CD8-positive, alpha-beta T cell (primary cell): ENCODE measurements at regions of chr17 and their contacts with region 1.

Region 1: GRCh38 chr17:59311130-59311920 is 20.1 kb upstream of the YPEL2 start:
- DNase-seq: peak in 6 of 9 experiments; percentile 16 to 77 (median 42)
- ATAC-seq: peak; percentile 99
- H3K4me3 ChIP-seq: no peak overlapping the region
- H3K4me3 Mint-ChIP-seq: no peak overlapping the region
- H3K27ac ChIP-seq: no peak overlapping the region
- H3K27ac Mint-ChIP-seq: no peak overlapping the region
- H3K4me1 ChIP-seq: no peaks in the 10 kb centered on the region
- H3K4me1 Mint-ChIP-seq: no peaks in the 10 kb centered on the region
- H3K27me3 ChIP-seq: no peaks in the 10 kb centered on the region
- H3K27me3 Mint-ChIP-seq: no peaks in the 10 kb centered on the region
- CTCF ChIP-seq: peak; percentile 76

Region 2: DNA sequence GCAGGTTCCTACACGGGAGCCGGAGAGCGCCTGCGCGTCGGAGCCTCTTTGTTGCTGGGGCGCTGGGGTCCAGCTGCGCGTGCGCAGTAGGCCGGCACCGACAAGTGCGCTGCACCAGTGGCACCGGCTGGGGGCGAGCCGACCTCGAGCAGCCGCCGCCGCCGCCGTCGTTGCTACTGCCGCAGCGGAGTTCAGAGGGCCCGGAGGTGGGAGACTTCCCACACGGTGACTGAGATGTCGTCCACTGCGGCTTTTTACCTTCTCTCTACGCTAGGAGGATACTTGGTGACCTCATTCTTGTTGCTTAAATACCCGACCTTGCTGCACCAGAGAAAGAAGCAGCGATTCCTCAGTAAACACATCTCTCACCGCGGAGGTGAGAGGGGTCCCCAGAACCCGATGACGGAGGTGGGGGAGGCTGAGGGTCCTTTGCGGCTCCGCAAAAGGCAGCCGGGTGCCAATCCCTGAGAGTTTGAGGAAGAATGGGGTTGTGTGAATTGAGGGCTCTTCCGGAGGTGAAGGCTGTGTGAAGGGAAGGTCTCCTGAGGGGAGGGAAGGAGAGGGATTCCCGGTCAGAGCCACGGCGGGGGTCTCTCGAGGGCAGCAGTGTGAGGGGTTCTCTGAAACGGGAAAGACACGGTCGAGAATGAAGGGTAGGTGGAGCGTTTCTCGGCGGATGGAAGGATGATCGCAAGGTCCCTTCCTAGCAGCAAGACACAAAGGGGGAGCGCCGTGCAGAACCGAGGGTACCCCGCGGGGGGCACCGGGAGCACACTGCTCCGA is 90.8 kb before region 1 on chr17 and contains the start of gene GDPD1:
- CTCF ChIA-PET with region 1: no interaction called
- POLR2A ChIA-PET with region 1: no interaction called
- intact Hi-C with region 1: loop called in 1 of 2 experiments (anchors 1 kb)
- DNase-seq: peak; percentile 94 to 99 (median 97)
- ATAC-seq: peak; percentile 96
- H3K4me3 ChIP-seq: peak within 1 kb of the TSS; percentile 97 to 100
- H3K4me3 Mint-ChIP-seq: peak within 1 kb of the TSS; percentile 98
- H3K27ac ChIP-seq: peak within 1 kb of the TSS; percentile 91 to 92
- H3K27ac Mint-ChIP-seq: peak within 1 kb of the TSS; percentile 99
- H3K4me1 ChIP-seq: peaks cover 4% of the 10 kb centered on the region
- H3K4me1 Mint-ChIP-seq: peaks cover 13% of the 10 kb centered on the region
- H3K27me3 ChIP-seq: no peaks in the 10 kb centered on the region
- H3K27me3 Mint-ChIP-seq: no peaks in the 10 kb centered on the region
- CTCF ChIP-seq: peak; percentile 71
- total RNA-seq, gene GDPD1: 1.1 to 1.8 TPM

Region 3: DNA sequence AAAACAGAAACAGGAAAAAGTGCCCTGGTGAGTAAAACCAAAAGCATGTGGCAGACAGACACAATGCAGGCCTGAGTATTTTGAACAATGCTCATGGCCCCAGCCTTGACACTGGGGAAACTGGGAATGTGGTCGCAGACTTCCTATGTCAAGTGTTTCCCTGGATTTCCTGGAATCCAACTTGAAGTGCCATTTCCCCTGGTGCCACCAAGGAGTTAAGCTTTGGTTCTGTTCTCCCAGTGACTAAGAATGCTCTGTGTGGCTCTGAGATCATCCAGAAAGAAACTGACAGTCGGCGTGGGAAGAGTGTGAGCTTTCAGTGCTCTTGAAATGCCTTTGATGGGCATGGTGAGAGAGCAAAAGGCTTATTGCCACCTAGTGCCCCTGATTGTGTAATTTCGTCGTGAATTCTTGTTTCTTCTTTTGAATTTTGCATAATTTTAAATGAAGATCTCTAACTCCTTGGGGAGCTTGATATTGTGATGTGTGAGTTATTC is 116.1 kb after region 1 on chr17:
- CTCF ChIA-PET with region 1: interaction called, 40 read pairs
- POLR2A ChIA-PET with region 1: no interaction called
- intact Hi-C with region 1: no loop called
- DNase-seq: peak in 4 of 9 experiments; percentile 6 to 40 (median 22)
- ATAC-seq: no peak
- H3K4me3 ChIP-seq: no peak overlapping the region
- H3K4me3 Mint-ChIP-seq: no peak overlapping the region
- H3K27ac ChIP-seq: no peak overlapping the region
- H3K27ac Mint-ChIP-seq: no peak overlapping the region
- H3K4me1 ChIP-seq: peaks cover 6% of the 10 kb centered on the region
- H3K4me1 Mint-ChIP-seq: peaks cover 9% of the 10 kb centered on the region
- H3K27me3 ChIP-seq: no peaks in the 10 kb centered on the region
- H3K27me3 Mint-ChIP-seq: no peaks in the 10 kb centered on the region
- CTCF ChIP-seq: no peak

Region 4: DNA sequence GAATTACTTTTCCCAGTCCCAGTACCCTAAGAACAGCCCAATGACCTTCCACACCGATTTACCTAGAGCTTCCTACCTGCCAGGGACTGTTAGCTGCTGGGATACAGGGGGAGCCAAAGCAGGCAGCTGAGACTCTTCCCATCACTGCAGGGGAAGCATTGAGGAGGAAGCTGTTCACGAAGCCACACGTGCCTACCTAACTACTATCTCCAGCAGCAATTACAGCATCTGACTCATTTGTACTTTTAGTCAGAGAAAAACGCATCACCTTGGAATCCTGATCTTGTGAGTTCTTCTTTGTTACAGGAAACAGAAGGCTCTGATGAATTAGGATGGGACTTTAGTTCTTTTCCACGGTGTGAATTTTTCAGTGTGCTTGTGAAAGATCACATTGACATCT is 140.4 kb after region 1 on chr17:
- CTCF ChIA-PET with region 1: interaction called, 12 read pairs
- POLR2A ChIA-PET with region 1: no interaction called
- intact Hi-C with region 1: no loop called
- DNase-seq: no peak
- ATAC-seq: no peak
- H3K4me3 ChIP-seq: no peak overlapping the region
- H3K4me3 Mint-ChIP-seq: no peak overlapping the region
- H3K27ac ChIP-seq: no peak overlapping the region
- H3K27ac Mint-ChIP-seq: no peak overlapping the region
- H3K4me1 ChIP-seq: no peaks in the 10 kb centered on the region
- H3K4me1 Mint-ChIP-seq: no peaks in the 10 kb centered on the region
- H3K27me3 ChIP-seq: peaks cover 0 to 2% of the 10 kb centered on the region in 2 experiments
- H3K27me3 Mint-ChIP-seq: no peaks in the 10 kb centered on the region
- CTCF ChIP-seq: no peak

Region 5: DNA sequence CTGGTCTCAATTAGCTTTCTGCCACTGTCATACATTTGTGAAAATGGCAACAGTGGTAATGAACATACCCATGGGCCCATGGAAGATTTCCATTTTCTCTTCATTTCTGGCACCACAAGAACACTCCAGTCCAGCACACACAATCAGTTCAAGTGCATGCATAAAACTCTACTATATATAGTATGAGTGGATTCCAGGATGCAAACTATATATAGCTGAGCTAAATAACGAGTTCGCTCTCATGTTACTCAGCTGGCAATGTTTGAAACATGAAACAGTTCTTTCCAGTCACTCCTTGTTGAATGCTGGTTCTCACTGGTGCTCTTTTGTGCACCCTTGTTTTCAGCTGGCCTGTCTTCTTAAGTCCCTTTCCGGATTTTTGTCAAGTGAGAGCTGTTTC is 178.9 kb after region 1 on chr17:
- CTCF ChIA-PET with region 1: no interaction called
- POLR2A ChIA-PET with region 1: no interaction called
- intact Hi-C with region 1: no loop called
- DNase-seq: no peak
- ATAC-seq: no peak
- H3K4me3 ChIP-seq: no peak overlapping the region
- H3K4me3 Mint-ChIP-seq: no peak overlapping the region
- H3K27ac ChIP-seq: no peak overlapping the region
- H3K27ac Mint-ChIP-seq: no peak overlapping the region
- H3K4me1 ChIP-seq: no peaks in the 10 kb centered on the region
- H3K4me1 Mint-ChIP-seq: no peaks in the 10 kb centered on the region
- H3K27me3 ChIP-seq: no peaks in the 10 kb centered on the region
- H3K27me3 Mint-ChIP-seq: peaks cover 8% of the 10 kb centered on the region
- CTCF ChIP-seq: no peak

Region 6: GRCh38 chr17:59521204-59522126 is 210.1 kb after region 1 on chr17:
- CTCF ChIA-PET with region 1: interaction called, 6 read pairs
- POLR2A ChIA-PET with region 1: no interaction called
- intact Hi-C with region 1: loop called (anchors 1 to 2 kb)
- DNase-seq: peak; percentile 22 to 76 (median 57)
- ATAC-seq: peak; percentile 74
- H3K4me3 ChIP-seq: no peak overlapping the region
- H3K4me3 Mint-ChIP-seq: no peak overlapping the region
- H3K27ac ChIP-seq: no peak overlapping the region
- H3K27ac Mint-ChIP-seq: no peak overlapping the region
- H3K4me1 ChIP-seq: no peaks in the 10 kb centered on the region
- H3K4me1 Mint-ChIP-seq: peaks cover 4% of the 10 kb centered on the region
- H3K27me3 ChIP-seq: no peaks in the 10 kb centered on the region
- H3K27me3 Mint-ChIP-seq: peaks cover 11% of the 10 kb centered on the region
- CTCF ChIP-seq: peak; percentile 94